Left colon (tissue), 2 donors: ENCODE measurements at regions of chr12 and their contacts with region 1.

Region 1: GRCh38 chr12:38316391-38317129 is at the start of gene ALG10B:
- DNase-seq: peak; percentile 91 to 94
- ATAC-seq: peak; percentile 100
- total RNA-seq, gene ALG10B: 4.9 to 5.3 TPM

Region 2: DNA sequence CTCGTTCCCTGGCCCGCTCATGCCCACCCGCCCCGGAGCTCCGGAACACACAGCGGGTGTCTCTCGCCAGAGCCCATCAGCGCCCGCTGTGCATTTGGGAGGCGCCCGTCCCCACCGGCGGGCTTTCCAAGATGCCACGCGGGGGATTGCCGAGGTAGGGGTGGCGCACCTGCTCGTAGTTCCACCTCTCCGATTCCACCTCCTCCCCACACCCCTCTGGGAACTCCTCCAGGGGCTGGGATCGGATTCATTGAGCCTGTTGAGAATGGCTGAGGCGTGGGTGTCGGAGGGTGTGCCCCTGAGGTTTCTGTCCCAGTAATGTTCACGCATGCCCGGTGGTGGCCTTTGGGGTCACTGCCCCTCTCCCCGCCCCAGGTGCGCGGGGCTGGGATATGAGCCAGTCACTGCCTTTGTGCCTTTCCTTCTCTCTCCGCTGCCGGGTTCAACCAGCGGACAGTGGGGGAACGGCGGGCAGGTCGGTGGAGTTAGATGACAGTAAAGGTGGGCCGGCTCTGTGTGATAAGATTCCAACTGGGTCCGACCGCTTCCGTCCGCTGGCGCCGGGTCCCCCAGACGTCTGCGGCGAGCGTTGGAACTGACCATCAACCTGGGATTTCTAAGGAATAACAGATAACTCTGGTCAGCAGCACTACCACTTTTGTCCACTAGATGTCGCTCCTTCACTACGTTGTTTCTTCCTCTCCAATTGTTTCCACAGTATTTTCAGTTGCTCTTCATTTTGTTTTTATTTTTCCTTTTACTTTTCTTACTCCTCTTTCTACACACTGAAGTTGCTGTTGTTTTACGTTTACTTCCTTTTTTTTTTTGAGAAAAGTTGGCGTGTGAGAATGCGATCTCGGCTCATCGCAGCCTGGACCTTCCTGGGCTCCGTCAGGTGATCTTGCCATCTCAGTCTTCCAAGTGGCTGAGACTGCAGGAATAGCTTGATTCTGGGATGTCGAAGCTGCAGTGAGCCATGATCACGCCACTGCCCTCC is 178.0 kb before region 1 on chr12:
- intact Hi-C with region 1: loop called in 1 of 2 experiments (anchors 2 kb)
- DNase-seq: peak; percentile 42 to 77
- ATAC-seq: peak; percentile 81

Region 3: GRCh38 chr12:38161123-38162000 is 155.2 kb before region 1 on chr12:
- intact Hi-C with region 1: no loop called
- DNase-seq: no peak
- ATAC-seq: no peak